Heart left ventricle (tissue), 16 donors: ENCODE measurements at regions of chr3 and their contacts with region 1.

Region 1: DNA sequence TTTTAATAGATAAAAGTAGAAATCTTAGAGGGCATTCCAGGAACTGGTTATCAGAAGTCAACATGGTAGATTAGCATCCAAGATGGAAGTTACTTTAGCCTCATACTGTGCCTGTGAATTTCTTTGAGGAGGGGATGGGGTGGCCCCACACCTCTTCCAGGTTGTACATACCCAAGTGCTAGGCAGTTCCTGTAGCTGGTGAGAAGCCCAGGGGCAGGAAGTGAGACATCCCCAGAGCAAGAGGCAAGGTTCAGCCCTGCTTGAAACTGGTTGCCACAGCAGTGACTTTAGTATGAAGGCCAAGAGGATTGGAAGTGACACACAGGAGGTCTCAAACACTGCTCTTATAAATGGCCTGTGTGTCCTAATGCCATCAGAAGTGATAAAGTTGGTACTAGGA is 11.9 kb downstream of the GTPBP8 start:
- DNase-seq: no peak
- ATAC-seq: peak in 2 of 4 donors; percentile 20 to 38
- H3K4me3 ChIP-seq: no peak overlapping the region
- H3K27ac ChIP-seq: no peak overlapping the region
- H3K4me1 ChIP-seq: peaks cover 0 to 5% (median 0%) of the 10 kb centered on the region in 12 donors
- H3K27me3 ChIP-seq: no peaks in the 10 kb centered on the region
- CTCF ChIP-seq: no peak
- POLR2A ChIP-seq: no peak

Region 2: DNA sequence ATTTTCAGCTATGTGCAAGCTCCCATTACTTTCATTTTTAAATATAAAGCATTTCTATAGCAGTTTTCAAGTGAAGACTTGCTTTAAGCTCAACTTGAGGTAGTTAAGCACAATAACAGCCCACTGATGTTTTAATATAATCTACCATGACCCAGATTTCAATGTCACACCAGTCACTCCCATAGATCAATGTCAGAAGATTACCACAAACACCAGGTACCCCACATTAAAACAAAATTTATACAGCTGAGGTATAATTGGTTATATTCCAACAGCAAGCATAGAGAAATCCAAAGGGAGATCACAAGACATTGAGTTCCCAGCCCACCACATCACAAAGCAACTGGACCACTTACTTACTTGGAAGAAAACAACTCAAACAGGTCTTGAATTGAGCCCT is 10.9 kb after region 1 on chr3:
- intact Hi-C with region 1: loop called in 1 of 10 experiments (anchors 2 kb)
- DNase-seq: no peak
- ATAC-seq: no peak
- H3K4me3 ChIP-seq: no peak overlapping the region
- H3K27ac ChIP-seq: no peak overlapping the region
- H3K4me1 ChIP-seq: peaks cover 0 to 23% (median 10%) of the 10 kb centered on the region in 12 donors
- H3K27me3 ChIP-seq: no peaks in the 10 kb centered on the region
- CTCF ChIP-seq: no peak
- POLR2A ChIP-seq: no peak

Region 3: DNA sequence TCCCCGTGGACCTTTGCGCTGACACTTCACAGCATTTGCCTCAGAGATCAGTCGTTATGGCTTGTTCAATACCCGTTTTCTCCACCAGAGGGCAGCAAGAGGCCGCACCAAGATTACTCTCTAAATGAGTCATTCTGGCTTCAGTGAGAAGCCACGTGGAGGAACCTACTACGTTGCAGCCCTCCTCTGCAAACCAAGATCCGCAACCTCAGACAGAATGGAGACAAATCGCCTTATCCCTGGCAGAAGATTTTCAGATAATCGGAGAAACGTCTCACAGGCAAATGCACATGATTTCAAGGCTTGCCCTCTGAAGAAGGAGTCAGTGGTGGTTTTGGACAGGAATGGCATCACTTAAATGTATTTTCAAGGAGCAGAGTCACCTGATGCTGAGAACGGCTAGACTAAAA is 48.6 kb after region 1 on chr3:
- intact Hi-C with region 1: no loop called
- DNase-seq: peak; percentile 72 to 83 (median 74)
- ATAC-seq: peak; percentile 91 to 96 (median 95)
- H3K4me3 ChIP-seq: peak overlapping the region in 1 of 12 donors; percentile 27
- H3K27ac ChIP-seq: peak overlapping the region in 2 of 12 donors; percentile 31 to 71
- H3K4me1 ChIP-seq: peaks cover 0 to 31% (median 5%) of the 10 kb centered on the region in 12 donors
- H3K27me3 ChIP-seq: no peaks in the 10 kb centered on the region
- CTCF ChIP-seq: peak; percentile 87 to 98 (median 96)
- POLR2A ChIP-seq: no peak